ENCODE measurements at regions of chr11 and their contacts with region 1.

Region 1: DNA sequence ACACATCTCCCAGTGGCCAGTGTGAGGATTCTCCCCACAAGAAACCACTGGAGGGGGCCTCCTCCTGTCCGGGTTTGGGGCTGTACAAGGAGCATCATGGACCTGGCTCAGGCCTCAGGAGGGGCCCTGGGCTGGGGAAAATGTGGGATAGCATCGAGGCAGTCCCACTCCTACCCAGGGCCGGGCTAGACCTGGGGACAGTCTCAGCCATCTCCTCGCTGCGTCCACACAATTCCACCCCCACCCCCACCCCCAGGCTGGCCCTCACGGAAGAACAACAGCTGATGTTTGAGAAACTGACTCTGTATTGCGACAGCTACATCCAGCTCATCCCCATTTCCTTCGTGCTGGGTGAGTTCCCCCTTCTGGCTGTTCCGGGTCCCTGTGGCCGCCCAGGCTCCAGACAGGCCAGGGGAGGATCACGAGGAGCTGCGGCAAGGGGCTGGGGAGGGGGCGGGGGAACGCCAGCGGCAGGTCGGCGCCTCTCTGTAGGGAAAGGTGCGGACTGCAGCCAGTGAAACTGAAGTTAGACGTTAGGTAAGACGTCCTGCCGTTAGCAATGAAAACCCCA is 4.8 kb downstream of the BEST1 start:
- DNase-seq: peak in 2 of 4 experiments; percentile 21 to 40
- ATAC-seq: peak; percentile 50
- H3K4me3 ChIP-seq: no peak overlapping the region
- H3K27ac ChIP-seq: no peak overlapping the region; the same call in 2 of the 3 replicates
- H3K4me1 ChIP-seq: peaks cover 35 to 37% of the 10 kb centered on the region in 2 experiments
- H3K27me3 ChIP-seq: no peaks in the 10 kb centered on the region
- CTCF ChIP-seq: peak in 2 of 3 experiments; percentile 6 to 13; a peak in 1 of 6 replicates
- EP300 ChIP-seq: no peak
- POLR2A ChIP-seq: no peak
- RAD21 ChIP-seq: no peak

Region 2: GRCh38 chr11:62054484-62055121 is 99.7 kb after region 1 on chr11:
- CTCF ChIA-PET with region 1: no interaction called
- POLR2A ChIA-PET with region 1: no interaction called
- in situ Hi-C with region 1: no loop called
- intact Hi-C with region 1: loop called (anchors 1 kb)
- DNase-seq: peak in 2 of 4 experiments; percentile 58 to 81
- ATAC-seq: peak; percentile 87
- H3K4me3 ChIP-seq: no peak overlapping the region
- H3K27ac ChIP-seq: no peak overlapping the region
- H3K4me1 ChIP-seq: peaks cover 0 to 9% of the 10 kb centered on the region in 2 experiments; a peak in 2 of 5 replicates
- H3K27me3 ChIP-seq: no peaks in the 10 kb centered on the region
- CTCF ChIP-seq: peak; percentile 70 to 93 (median 73)
- EP300 ChIP-seq: peak; percentile 62
- POLR2A ChIP-seq: no peak
- RAD21 ChIP-seq: peak; percentile 91 to 96